HEK293 (cell line): ENCODE measurements at regions of chr5 and their contacts with region 1.

Region 1: DNA sequence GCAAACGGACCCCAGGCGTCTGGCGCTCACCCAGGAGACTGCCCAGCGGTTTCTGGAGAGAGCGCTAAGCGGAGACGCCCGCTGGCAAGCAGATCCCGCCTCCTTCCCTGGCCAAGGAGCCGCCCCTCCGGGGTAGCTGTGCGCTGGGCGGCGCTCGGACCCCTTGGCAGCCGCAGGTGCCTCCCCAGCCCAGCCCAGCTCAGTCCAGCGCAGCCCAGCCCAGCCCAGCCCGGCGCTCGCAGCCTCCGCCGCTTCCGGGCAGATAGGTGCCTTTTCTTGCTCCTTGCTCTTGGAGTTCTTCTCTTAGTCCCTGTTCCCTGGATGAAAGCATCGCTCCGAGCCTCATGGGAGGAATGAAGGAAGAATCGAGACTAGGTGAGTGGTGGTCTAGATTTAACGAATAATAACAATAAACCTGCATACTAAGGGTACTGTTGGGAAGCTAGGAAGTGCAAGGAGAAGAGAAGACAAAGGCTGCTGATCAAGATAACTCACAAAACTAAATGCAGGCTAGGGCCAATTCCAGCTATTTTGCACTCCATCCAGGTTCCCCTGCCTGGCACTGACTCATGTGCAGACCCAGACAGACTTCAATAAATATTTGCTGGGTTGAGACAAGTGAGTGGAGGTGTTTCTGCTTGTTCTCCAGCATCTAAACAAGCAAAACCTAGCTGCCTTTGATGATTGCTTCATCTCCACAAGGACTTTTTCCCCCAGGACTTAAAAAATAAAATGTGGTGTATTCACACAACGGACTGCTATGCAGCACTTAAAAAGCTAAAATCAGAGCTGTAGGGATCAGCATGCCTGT is at the start of gene STK32A:
- H3K4me3 ChIP-seq: peak within 1 kb of the TSS; percentile 66
- H3K27ac ChIP-seq: no peak within 1 kb of the TSS
- H3K4me1 ChIP-seq: no peaks in the 10 kb centered on the region
- CTCF ChIP-seq: peak; percentile 38; the same call in 1 of the 2 replicates

Region 2: DNA sequence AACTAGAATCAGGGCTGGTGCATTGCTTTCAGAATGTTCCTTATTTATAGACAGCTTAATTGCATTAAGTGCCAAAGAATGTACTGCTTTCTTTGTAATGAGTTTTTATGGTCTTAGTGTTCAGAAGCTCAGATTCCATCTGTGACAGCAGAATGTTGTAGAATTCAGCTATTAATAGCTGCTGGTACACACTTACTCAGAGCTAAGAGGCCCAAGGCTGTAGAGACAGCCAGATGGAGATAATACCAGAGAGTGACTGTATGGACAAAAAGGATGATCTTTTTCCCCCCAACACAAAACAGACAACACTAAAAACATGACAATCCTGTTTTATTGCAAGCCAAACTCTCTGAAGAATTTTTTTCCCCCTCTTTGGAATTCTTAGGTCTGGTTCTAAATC is 406.6 kb before region 1 on chr5:
- CTCF ChIA-PET with region 1: no interaction called
- POLR2A ChIA-PET with region 1: no interaction called
- H3K4me3 ChIP-seq: no peak overlapping the region
- H3K27ac ChIP-seq: no peak overlapping the region
- H3K4me1 ChIP-seq: no peaks in the 10 kb centered on the region
- CTCF ChIP-seq: no peak

Region 3: DNA sequence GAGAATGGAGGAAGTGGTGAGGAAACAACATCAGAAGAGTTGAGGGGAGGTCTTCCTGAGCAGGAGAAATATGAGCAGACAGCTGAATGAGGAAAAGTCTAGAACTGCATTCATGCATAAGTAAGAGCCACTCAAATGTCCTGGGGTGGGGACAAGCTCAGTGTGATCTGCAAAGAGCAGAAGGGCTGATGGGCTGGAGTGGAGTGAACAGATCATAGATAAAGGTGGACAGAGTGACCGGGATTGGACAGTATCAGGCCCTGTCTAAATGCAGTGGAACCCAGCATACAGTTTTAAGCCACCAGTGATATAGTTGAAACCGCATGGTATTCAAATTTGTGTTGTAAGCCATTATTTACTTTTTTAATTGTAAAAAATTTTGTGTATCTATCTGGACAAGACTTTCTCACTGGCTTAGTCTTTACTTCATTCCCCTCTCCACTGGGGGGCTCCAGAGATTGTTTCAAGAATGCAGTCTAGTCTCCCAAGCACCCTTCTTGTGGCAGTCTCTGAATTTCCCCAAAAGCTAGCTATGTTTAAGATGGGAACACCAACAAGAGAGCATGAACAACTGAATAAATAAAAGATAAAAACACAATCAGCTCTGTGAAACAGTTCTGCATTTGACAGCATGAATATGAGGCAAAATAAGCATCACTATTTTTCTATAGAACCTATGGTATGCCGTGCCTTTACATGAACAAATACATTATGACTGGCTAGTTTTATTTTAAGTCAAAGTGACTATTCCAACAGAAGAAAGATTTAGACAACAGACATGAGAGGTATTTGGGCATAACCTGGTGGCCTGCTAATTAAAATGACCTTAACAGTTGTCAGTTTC is 10.9 kb before region 1 on chr5:
- CTCF ChIA-PET with region 1: interaction called, 10 read pairs
- POLR2A ChIA-PET with region 1: no interaction called
- H3K4me3 ChIP-seq: no peak overlapping the region
- H3K27ac ChIP-seq: no peak overlapping the region
- H3K4me1 ChIP-seq: no peaks in the 10 kb centered on the region
- CTCF ChIP-seq: no peak